HEK293 (cell line): ENCODE measurements at regions of chr2 and their contacts with region 1.

Region 1: GRCh38 chr2:10072656-10073480 is 7.3 kb downstream of the CYS1 start:
- H3K4me3 ChIP-seq: no peak overlapping the region
- H3K27ac ChIP-seq: no peak overlapping the region
- H3K4me1 ChIP-seq: 0 out of 2 replicates have a peak, but pooled peaks cover 2% of the 10 kb centered on the region
- CTCF ChIP-seq: peak; percentile 77

Region 2: DNA sequence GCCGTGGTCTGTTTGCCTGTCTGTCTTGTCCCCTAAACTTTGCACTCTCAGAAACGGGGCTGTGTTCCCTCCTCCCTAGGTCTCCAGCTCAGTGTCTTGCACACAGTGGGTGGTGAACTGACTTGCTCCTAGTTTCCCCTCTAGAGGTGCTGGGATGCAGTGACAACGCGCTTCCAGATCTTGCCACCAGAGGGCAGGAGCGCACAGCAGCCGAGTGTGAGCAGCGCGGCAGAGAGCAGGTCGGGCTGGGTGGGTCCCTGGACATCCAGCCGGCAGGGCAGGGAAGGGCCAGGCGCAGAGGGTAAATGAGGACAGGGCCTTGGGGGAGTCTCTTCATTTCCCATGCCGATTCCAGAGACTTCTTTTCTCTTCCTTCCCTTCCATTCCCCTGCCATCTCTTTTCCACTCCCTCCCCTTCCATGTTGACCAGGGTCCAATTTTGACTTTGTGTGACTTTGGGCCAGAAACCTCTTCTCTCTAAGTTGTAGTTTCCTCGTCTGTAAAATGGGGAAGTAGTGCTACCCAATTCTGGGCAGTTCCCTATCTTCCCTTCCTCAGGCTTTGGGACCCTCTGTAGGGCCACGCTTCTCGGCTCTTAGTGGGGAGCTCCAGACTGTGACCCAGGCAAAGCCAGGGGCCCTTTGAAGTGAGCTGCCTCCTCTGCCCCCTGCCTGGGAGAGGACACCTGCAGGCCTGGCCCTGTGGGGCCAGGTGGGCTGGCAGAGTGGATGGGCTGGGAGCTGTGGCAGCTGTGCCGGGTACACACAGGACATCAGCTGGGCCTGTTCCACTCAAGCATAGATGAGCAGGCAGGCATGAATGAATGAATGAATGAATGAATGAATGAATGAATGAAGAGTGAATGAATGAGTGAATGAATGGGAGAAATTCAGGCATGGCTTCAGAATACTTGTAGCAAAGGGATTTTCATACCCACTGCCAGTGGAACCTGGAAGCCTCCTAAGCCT is 272.9 kb before region 1 on chr2:
- CTCF ChIA-PET with region 1: interaction called, 20 read pairs
- POLR2A ChIA-PET with region 1: no interaction called
- H3K4me3 ChIP-seq: no peak overlapping the region
- H3K27ac ChIP-seq: no peak overlapping the region
- H3K4me1 ChIP-seq: peaks cover 3% of the 10 kb centered on the region; the same call in 1 of the 2 replicates
- CTCF ChIP-seq: peak; percentile 98

Region 3: GRCh38 chr2:10057231-10058107 is 15.4 kb before region 1 on chr2:
- CTCF ChIA-PET with region 1: interaction called, 23 read pairs
- POLR2A ChIA-PET with region 1: interaction called, 11 read pairs
- H3K4me3 ChIP-seq: peak overlapping the region; percentile 36
- H3K27ac ChIP-seq: peak overlapping the region; percentile 35; the same call in 1 of the 2 replicates
- H3K4me1 ChIP-seq: no peaks in the 10 kb centered on the region; the same call in 1 of the 2 replicates
- CTCF ChIP-seq: no peak

Region 4: DNA sequence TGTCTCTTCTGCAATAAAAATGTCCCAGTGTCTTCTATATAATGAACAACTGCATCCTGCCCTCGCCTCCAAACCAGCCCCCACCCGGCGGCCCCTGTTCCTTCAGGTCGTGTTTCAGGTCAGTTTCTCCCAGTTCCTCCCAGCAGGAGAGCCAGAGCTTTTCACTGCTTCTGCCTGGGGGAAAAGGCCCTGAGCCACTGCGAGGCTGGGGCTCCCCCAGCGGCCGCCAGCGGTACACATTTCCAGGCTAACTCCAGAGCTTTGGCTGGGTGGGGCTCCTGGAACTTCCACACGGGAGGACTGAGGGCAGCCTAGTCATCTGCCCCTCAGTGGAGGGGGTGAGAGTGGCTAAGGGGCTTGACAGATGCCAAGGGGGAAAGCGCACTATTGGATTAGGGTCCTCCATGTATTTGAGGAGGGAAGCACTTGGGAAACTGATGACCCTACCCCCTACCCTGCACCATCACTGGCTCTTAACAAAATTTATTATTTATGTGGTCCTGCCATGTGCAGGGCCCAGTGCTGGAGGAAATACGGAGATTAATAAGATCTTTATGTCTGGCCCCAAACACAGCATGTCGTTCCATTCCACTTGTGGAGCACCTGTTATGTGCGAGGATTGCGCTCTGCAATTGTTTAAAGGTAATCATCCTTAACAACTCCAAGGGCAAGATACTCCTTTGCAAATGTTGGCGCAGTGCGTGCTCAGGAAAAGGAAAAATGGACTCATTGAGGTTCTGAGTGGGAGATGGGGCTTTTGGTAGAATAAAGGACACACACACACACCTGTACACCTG is 24.7 kb after region 1 on chr2:
- CTCF ChIA-PET with region 1: interaction called, 124 read pairs
- POLR2A ChIA-PET with region 1: interaction called, 4 read pairs
- H3K4me3 ChIP-seq: no peak overlapping the region
- H3K27ac ChIP-seq: no peak overlapping the region
- H3K4me1 ChIP-seq: peaks cover 2% of the 10 kb centered on the region; the same call in 1 of the 2 replicates
- CTCF ChIP-seq: peak; percentile 72

Region 5: DNA sequence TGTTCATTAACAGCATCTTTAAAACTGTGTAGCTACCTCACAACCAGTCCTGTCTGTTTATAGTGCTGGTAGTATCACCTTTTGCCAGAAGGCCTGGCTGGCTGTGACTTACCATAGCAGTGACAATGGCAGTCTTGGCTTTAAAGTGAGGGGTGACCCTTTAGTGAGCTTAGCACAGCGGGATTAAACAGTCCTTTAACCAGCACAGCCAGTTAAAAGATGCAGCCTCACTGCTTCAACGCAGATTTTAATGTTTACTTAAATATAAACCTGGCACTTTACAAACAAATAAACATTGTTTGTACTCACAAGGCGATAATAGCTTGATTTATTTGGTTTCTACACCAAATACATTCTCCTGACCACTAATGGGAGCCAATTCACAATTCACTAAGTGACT is 56.6 kb after region 1 on chr2:
- CTCF ChIA-PET with region 1: interaction called, 22 read pairs
- POLR2A ChIA-PET with region 1: interaction called, 10 read pairs
- H3K4me3 ChIP-seq: no peak overlapping the region
- H3K27ac ChIP-seq: no peak overlapping the region
- H3K4me1 ChIP-seq: peaks cover 5% of the 10 kb centered on the region; the same call in 1 of the 2 replicates
- CTCF ChIP-seq: no peak

Region 6: DNA sequence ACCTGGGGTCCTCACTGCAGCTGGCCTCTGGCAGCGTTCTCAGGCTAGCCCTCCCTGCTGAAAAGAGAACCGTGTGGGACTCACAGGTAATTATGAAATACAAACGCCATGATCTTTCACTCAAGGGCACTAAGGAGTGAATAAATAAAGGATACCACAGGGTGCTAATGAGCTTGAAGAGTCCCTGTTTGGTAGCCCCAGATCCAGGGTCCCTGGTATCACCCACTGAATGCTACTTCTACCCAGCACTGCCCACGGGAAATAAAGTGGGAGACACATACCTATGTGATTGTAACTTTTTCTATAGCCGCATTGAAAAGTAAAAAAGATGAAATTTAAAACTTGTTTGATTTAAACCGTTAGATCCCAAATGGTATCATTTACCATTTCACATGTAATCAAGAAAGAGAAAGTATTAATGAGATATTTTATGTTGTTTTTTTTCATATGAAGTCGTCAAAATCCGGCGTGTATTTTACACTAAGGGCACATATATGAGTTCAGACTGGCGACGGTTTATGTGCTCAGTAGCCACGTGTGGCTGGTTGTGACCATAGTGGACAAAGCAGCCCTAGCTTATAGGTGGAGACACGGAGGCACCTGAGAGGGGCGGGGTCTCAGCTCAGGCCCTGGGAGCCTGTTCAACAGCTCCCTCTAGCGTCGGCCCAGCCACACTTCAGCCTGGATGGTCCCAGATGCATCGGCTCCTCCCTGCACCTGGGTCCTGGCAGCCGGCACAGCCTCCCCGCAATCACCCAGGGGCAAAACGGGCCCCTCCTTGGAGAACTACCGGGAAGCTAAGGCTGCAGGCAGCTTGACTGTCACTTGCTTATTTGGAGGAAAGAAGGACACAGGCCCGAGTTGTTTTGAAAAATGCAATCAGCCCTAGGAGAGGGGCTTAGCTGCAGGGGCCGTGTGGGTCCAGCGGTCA is 336.0 kb after region 1 on chr2:
- CTCF ChIA-PET with region 1: interaction called, 30 read pairs
- POLR2A ChIA-PET with region 1: no interaction called
- H3K4me3 ChIP-seq: no peak overlapping the region
- H3K27ac ChIP-seq: no peak overlapping the region
- H3K4me1 ChIP-seq: no peaks in the 10 kb centered on the region
- CTCF ChIP-seq: peak; percentile 91

Region 7: DNA sequence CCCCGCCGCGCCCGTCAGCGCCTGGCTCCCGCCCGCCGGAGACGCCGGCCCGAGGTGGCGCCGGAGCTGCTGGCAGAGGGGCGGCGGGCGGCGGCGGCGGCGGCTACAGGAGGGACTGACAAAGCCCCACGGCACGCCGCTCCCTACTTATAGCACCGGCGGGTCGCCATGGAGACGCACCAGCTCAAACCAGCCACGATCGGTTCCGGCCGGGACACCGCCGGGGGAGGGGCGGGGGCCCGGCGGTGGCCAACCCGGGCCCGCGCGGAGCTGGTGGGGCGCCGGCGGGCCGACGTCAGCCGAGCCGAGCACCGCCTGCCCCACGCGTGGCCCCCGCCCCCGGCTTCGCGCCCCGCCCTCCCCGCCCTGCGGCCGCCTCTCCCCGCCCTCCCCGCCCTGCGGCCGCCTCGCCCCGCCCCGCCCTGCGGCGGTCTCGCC is 375.4 kb after region 1 on chr2 and contains the start of gene ODC1:
- CTCF ChIA-PET with region 1: interaction called, 11 read pairs
- POLR2A ChIA-PET with region 1: no interaction called
- H3K4me3 ChIP-seq: peak within 1 kb of the TSS; percentile 44
- H3K27ac ChIP-seq: peak within 1 kb of the TSS; percentile 86
- H3K4me1 ChIP-seq: peaks cover 11% of the 10 kb centered on the region
- CTCF ChIP-seq: no peak